ENCODE measurements at regions of chr1 and their contacts with region 1.

Region 1: GRCh38 chr1:205273551-205273982 is 45.8 kb downstream of the TMCC2 start:
- DNase-seq: no peak
- H3K4me3 ChIP-seq: no peak overlapping the region
- H3K27ac ChIP-seq: no peak overlapping the region
- H3K4me1 ChIP-seq: peaks cover 26% of the 10 kb centered on the region
- H3K27me3 ChIP-seq: no peaks in the 10 kb centered on the region
- CTCF ChIP-seq: peak; percentile 75 to 95 (median 94)
- POLR2A ChIP-seq: no peak

Region 2: DNA sequence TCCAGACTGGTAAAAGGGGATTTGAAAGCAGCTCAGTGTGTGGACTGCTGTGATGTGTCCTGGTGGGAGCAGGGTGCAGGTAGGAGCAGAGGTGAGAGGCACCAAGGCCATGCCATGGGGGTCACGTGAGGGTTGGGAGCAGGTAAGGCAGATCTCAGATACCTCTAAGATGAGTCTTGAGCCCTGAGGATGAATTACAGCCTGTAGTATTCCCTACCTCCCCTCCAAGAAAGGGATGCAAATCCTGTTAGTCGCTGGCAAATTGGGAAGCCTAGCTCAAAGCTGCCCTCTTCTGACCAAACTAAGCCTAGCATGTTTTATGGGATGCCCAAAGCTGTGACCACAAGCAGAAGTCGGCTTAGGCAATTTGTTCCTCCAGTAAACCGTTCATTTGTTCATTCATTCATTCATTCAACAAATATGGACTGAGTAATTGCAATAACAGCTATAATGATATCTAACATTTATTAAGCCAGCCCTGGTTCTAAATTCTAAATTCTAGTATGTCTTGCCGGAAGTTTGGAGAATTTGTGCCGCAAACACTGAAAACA is 51.8 kb after region 1 on chr1:
- intact Hi-C with region 1: loop called (anchors 5 kb)
- DNase-seq: no peak
- H3K4me3 ChIP-seq: no peak overlapping the region
- H3K27ac ChIP-seq: no peak overlapping the region
- H3K4me1 ChIP-seq: peaks cover 7% of the 10 kb centered on the region
- H3K27me3 ChIP-seq: no peaks in the 10 kb centered on the region
- CTCF ChIP-seq: peak; percentile 68 to 80 (median 72)
- POLR2A ChIP-seq: no peak

Measured in vagina (tissue), 2 donors.